A673 (cell line): ENCODE measurements at regions of chr18 and their contacts with region 1.

Region 1: GRCh38 chr18:24075731-24076130 is 61.2 kb downstream of the TTC39C start:
- DNase-seq: no peak
- H3K4me3 ChIP-seq: no peak overlapping the region
- H3K27ac ChIP-seq: no peak overlapping the region
- H3K4me1 ChIP-seq: peaks cover 4% of the 10 kb centered on the region
- H3K27me3 ChIP-seq: no peaks in the 10 kb centered on the region
- CTCF ChIP-seq: no peak

Region 2: GRCh38 chr18:24126155-24126961 is 50.6 kb after region 1 on chr18:
- CTCF ChIA-PET with region 1: no interaction called
- POLR2A ChIA-PET with region 1: no interaction called
- intact Hi-C with region 1: loop called (anchors 5 kb)
- DNase-seq: no peak
- H3K4me3 ChIP-seq: no peak overlapping the region
- H3K27ac ChIP-seq: no peak overlapping the region
- H3K4me1 ChIP-seq: no peaks in the 10 kb centered on the region
- H3K27me3 ChIP-seq: no peaks in the 10 kb centered on the region
- CTCF ChIP-seq: no peak